MCF 10A (cell line): ENCODE measurements at regions of chr13 and their contacts with region 1.

Region 1: GRCh38 chr13:37769078-37769477 is 100.5 kb downstream of the TRPC4 start:
- DNase-seq: peak; percentile 23
- H3K4me3 Mint-ChIP-seq: no peak overlapping the region
- H3K27ac Mint-ChIP-seq: no peak overlapping the region
- H3K4me1 Mint-ChIP-seq: no peaks in the 10 kb centered on the region
- H3K27me3 Mint-ChIP-seq: peaks cover 13% of the 10 kb centered on the region
- CTCF ChIP-seq: peak; percentile 25

Region 2: DNA sequence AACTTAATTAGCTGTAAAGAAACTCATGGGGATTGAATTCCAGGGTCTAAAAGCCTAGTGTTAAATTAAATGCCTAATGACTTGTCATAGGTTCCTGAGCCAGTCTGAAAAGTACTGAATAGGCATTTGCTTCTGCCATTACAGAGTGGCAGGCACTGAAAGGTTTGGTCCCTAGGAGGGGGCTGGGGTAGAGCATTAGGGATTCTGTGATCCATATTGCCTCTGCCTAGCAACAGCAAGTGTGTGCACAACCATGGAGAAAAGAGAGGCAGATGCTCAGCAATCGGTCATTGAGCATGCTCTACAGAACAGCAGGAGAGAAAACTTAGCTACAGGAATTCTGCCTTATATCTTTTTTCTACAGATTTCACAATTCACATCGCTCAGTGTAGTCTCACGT is 33.0 kb before region 1 on chr13:
- CTCF ChIA-PET with region 1: no interaction called
- POLR2A ChIA-PET with region 1: no interaction called
- intact Hi-C with region 1: no loop called
- DNase-seq: no peak
- H3K4me3 Mint-ChIP-seq: no peak overlapping the region
- H3K27ac Mint-ChIP-seq: no peak overlapping the region
- H3K4me1 Mint-ChIP-seq: no peaks in the 10 kb centered on the region
- H3K27me3 Mint-ChIP-seq: peaks cover 15% of the 10 kb centered on the region
- CTCF ChIP-seq: no peak

Region 3: GRCh38 chr13:38223089-38223488 is 454.0 kb after region 1 on chr13:
- CTCF ChIA-PET with region 1: no interaction called
- POLR2A ChIA-PET with region 1: no interaction called
- intact Hi-C with region 1: loop called (anchors 1 kb)
- DNase-seq: peak; percentile 32
- H3K4me3 Mint-ChIP-seq: no peak overlapping the region
- H3K27ac Mint-ChIP-seq: no peak overlapping the region
- H3K4me1 Mint-ChIP-seq: no peaks in the 10 kb centered on the region
- H3K27me3 Mint-ChIP-seq: no peaks in the 10 kb centered on the region
- CTCF ChIP-seq: no peak

Region 4: GRCh38 chr13:38530492-38530891 is 761.4 kb after region 1 on chr13:
- CTCF ChIA-PET with region 1: interaction called, 3 read pairs
- POLR2A ChIA-PET with region 1: no interaction called
- intact Hi-C with region 1: loop called (anchors 1 kb)
- DNase-seq: peak; percentile 33
- H3K4me3 Mint-ChIP-seq: no peak overlapping the region
- H3K27ac Mint-ChIP-seq: no peak overlapping the region
- H3K4me1 Mint-ChIP-seq: no peaks in the 10 kb centered on the region
- H3K27me3 Mint-ChIP-seq: peaks cover 29% of the 10 kb centered on the region
- CTCF ChIP-seq: peak; percentile 42

Region 5: GRCh38 chr13:38582133-38582532 is 813.1 kb after region 1 on chr13:
- CTCF ChIA-PET with region 1: interaction called, 5 read pairs
- POLR2A ChIA-PET with region 1: no interaction called
- intact Hi-C with region 1: loop called (anchors 1 kb)
- DNase-seq: peak; percentile 61
- H3K4me3 Mint-ChIP-seq: no peak overlapping the region
- H3K27ac Mint-ChIP-seq: no peak overlapping the region
- H3K4me1 Mint-ChIP-seq: no peaks in the 10 kb centered on the region
- H3K27me3 Mint-ChIP-seq: peaks cover 17% of the 10 kb centered on the region
- CTCF ChIP-seq: peak; percentile 32